Mammary epithelial cell (primary cell): ENCODE measurements at regions of chr17 and their contacts with region 1.

Region 1: DNA sequence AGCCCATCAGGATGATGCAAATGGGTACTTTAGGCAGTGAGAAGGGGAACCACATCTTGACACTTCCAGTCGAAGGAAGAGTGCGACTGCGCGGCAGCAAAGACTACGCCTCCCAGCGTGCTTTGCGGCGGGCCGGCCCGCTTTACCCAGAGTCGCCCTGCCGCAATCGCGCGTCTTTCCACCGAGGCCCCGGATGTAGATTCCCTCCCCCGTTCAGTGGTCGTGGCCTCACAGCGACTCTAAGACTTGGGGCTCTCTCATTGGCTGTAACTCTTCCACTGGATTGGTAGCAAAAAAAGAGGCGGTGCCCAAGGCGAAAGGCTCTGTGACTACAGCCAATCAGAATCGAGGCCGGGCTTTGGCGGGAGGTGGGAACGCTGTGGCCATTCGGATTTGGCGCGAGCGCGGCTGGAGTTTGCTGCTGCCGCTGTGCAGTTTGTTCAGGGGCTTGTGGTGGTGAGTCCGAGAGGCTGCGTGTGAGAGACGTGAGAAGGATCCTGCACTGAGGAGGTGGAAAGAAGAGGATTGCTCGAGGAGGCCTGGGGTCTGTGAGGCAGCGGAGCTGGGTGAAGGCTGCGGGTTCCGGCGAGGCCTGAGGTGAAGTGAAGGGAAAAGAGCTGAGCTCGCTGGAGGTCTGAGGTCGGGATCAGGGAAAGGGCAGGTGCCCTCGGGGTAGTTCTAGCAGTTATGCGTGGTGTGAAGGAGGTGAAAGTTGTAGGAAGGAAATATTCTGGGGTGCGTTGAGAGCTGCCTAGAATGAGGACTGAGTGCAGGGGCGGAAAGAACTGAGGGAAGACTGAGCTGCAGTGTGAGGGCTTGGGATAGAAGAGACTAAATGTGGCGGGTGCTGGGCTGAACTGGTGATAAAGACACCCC is at the start of gene CDC6:
- DNase-seq: peak; percentile 99
- H3K4me3 ChIP-seq: peak within 1 kb of the TSS; percentile 53 to 84 (median 70)
- H3K27ac ChIP-seq: peak within 1 kb of the TSS; percentile 88
- H3K4me1 ChIP-seq: peaks cover 38% of the 10 kb centered on the region
- H3K27me3 ChIP-seq: no peaks in the 10 kb centered on the region
- CTCF ChIP-seq: no peak
- total RNA-seq, gene CDC6: 5.2 to 61.8 TPM

Region 2: GRCh38 chr17:40139566-40140058 is 148.1 kb before region 1 on chr17:
- CTCF ChIA-PET with region 1: no interaction called
- dilution Hi-C with region 1: no loop called
- in situ Hi-C with region 1: no loop called
- intact Hi-C with region 1: loop called (anchors 1 kb)
- DNase-seq: no peak
- H3K4me3 ChIP-seq: peak overlapping the region; percentile 55 to 63 (median 55)
- H3K27ac ChIP-seq: peak overlapping the region; percentile 73
- H3K4me1 ChIP-seq: peaks cover 17% of the 10 kb centered on the region
- H3K27me3 ChIP-seq: no peaks in the 10 kb centered on the region
- CTCF ChIP-seq: no peak

Region 3: GRCh38 chr17:40191237-40192208 is 96.2 kb before region 1 on chr17:
- CTCF ChIA-PET with region 1: no interaction called
- dilution Hi-C with region 1: no loop called
- in situ Hi-C with region 1: loop called in 1 of 2 experiments (anchors 5 kb)
- intact Hi-C with region 1: no loop called
- DNase-seq: peak; percentile 75
- H3K4me3 ChIP-seq: peak overlapping the region in 2 of 3 experiments; percentile 37 to 41
- H3K27ac ChIP-seq: no peak overlapping the region
- H3K4me1 ChIP-seq: peaks cover 24% of the 10 kb centered on the region
- H3K27me3 ChIP-seq: no peaks in the 10 kb centered on the region
- CTCF ChIP-seq: peak; percentile 66 to 81

Region 4: GRCh38 chr17:40219073-40219860 is 68.5 kb before region 1 on chr17 and contains the start of gene WIPF2:
- CTCF ChIA-PET with region 1: interaction called, 5 read pairs
- dilution Hi-C with region 1: no loop called
- in situ Hi-C with region 1: no loop called
- intact Hi-C with region 1: loop called (anchors 1 kb)
- DNase-seq: peak; percentile 94
- H3K4me3 ChIP-seq: peak within 1 kb of the TSS; percentile 68 to 79 (median 73)
- H3K27ac ChIP-seq: peak within 1 kb of the TSS; percentile 82
- H3K4me1 ChIP-seq: no peaks in the 10 kb centered on the region
- H3K27me3 ChIP-seq: no peaks in the 10 kb centered on the region
- CTCF ChIP-seq: peak; percentile 37 to 82
- total RNA-seq, gene WIPF2: 8.8 to 33.2 TPM